ENCODE measurements at regions of chr20 and their contacts with region 1.

Region 1: GRCh38 chr20:45771182-45771759 is 20.4 kb downstream of the WFDC3 start:
- DNase-seq: peak; percentile 50 to 89 (median 74)
- ATAC-seq: peak; percentile 70 to 82 (median 74)
- H3K4me3 ChIP-seq: no peak overlapping the region
- H3K4me3 Mint-ChIP-seq: no peak overlapping the region
- H3K27ac ChIP-seq: no peak overlapping the region
- H3K27ac Mint-ChIP-seq: peak overlapping the region in 1 of 2 donors; percentile 52
- H3K4me1 ChIP-seq: peaks cover 0 to 3% of the 10 kb centered on the region in 2 experiments
- H3K4me1 Mint-ChIP-seq: peaks cover 0 to 5% (median 5%) of the 10 kb centered on the region in 3 donors
- H3K27me3 ChIP-seq: peaks cover 0 to 19% of the 10 kb centered on the region in 2 experiments
- H3K27me3 Mint-ChIP-seq: peaks cover 9 to 26% of the 10 kb centered on the region in 2 donors

Region 2: DNA sequence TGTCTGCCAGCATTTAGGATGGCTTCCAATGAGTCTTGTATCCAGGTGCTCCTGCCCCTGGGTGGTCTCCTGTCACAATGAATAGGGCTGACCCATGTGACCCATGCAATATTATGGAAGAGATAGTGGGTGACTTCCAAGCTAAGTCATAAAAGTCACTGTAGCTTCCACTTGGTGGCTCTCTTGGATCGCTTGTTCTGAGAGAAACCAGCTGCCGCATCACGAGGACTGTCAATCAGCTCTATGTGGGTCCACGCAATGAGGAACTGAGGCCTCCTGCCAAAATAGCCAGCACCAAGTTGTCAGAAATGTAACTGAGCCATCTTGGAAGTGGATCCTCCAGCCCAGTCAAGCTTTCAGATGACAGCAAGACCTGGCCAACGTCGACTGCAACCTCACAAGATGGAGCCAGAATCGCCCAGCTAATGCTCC is 448.3 kb before region 1 on chr20:
- CTCF ChIA-PET with region 1: interaction called, 22 to 51 read pairs
- POLR2A ChIA-PET with region 1: no interaction called
- DNase-seq: peak in 1 of 35 experiments; percentile 15
- ATAC-seq: no peak
- H3K4me3 ChIP-seq: no peak overlapping the region
- H3K4me3 Mint-ChIP-seq: no peak overlapping the region
- H3K27ac ChIP-seq: no peak overlapping the region
- H3K27ac Mint-ChIP-seq: no peak overlapping the region
- H3K4me1 ChIP-seq: peaks cover 13 to 33% of the 10 kb centered on the region in 2 experiments
- H3K4me1 Mint-ChIP-seq: peaks cover 21 to 27% (median 27%) of the 10 kb centered on the region in 3 donors
- H3K27me3 ChIP-seq: no peaks in the 10 kb centered on the region
- H3K27me3 Mint-ChIP-seq: no peaks in the 10 kb centered on the region

Region 3: GRCh38 chr20:46157625-46158024 is 386.4 kb after region 1 on chr20:
- CTCF ChIA-PET with region 1: no interaction called
- POLR2A ChIA-PET with region 1: no interaction called
- DNase-seq: no peak
- ATAC-seq: no peak
- H3K4me3 ChIP-seq: no peak overlapping the region
- H3K4me3 Mint-ChIP-seq: no peak overlapping the region
- H3K27ac ChIP-seq: no peak overlapping the region
- H3K27ac Mint-ChIP-seq: no peak overlapping the region
- H3K4me1 ChIP-seq: no peaks in the 10 kb centered on the region
- H3K4me1 Mint-ChIP-seq: no peaks in the 10 kb centered on the region
- H3K27me3 ChIP-seq: peaks cover 3 to 42% of the 10 kb centered on the region in 2 experiments
- H3K27me3 Mint-ChIP-seq: peaks cover 30 to 44% of the 10 kb centered on the region in 2 donors